ENCODE measurements at regions of chr11 and their contacts with region 1.

Region 1: DNA sequence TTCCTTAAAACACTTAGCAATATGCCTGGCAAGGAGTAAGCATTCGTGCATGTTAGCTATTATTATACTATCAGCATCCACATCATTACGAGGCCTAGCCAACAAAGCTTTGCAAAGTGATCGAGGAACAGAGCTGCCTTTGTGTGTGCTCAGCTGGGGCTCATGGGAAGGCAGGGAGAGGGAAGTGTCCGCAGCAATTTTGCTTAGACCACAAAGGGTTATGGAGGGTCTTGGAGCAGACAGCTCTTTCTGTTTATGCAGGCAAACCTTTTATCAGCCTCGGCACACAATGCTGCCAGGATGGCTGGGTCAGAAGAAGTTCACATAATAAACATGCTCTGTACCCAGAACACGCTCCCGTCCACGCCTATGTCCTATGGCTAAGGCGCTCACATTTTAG is 10.9 kb upstream of the DKK3 start:
- DNase-seq: no peak
- H3K4me3 ChIP-seq: no peak overlapping the region
- H3K27ac ChIP-seq: peak overlapping the region in 2 of 4 donors; percentile 1 to 7
- H3K4me1 ChIP-seq: peaks cover 0 to 6% (median 3%) of the 10 kb centered on the region in 4 donors
- H3K27me3 ChIP-seq: no peaks in the 10 kb centered on the region
- CTCF ChIP-seq: no peak
- EP300 ChIP-seq: no peak
- POLR2A ChIP-seq: no peak

Region 2: GRCh38 chr11:11958403-11959231 is 60.7 kb before region 1 on chr11:
- in situ Hi-C with region 1: no loop called
- intact Hi-C with region 1: loop called (anchors 10 kb)
- DNase-seq: no peak
- H3K4me3 ChIP-seq: no peak overlapping the region
- H3K27ac ChIP-seq: no peak overlapping the region
- H3K4me1 ChIP-seq: no peaks in the 10 kb centered on the region
- H3K27me3 ChIP-seq: no peaks in the 10 kb centered on the region
- CTCF ChIP-seq: no peak
- EP300 ChIP-seq: no peak
- POLR2A ChIP-seq: no peak

Region 3: DNA sequence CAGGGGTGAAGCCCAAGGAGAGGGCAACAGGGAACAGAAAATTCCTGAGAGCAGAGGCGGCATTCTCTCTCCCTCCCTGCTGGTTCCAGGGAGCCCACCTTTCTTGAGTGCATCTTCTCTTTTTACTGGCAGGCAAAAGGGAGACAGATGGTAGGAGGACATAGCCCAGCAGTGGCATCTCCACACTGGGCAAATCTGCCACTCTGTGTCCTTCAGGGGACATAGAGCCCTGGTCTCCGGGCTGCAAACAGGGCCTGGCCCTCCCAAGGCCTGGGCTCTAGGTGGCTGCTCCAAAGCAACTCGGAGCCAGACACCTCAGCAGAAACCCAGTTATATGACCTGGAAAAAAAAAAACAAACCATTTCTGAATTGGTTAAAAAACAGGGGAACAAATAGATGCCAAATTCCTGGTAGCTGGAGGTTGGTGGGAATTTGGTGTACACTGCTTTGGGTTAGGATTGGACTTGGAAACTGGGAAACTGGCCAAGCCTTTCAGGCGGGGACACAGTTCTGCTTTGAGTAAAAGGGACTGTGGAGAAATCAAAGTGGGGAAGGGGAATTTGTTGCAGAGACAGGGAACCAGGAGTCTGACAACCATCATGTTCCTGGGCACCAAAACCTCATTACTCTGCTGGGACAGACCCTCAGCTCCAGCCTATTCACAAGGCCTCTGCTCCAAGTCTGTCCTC is 12.7 kb after region 1 on chr11:
- in situ Hi-C with region 1: no loop called
- intact Hi-C with region 1: no loop called
- DNase-seq: no peak
- H3K4me3 ChIP-seq: no peak overlapping the region
- H3K27ac ChIP-seq: no peak overlapping the region
- H3K4me1 ChIP-seq: no peaks in the 10 kb centered on the region
- H3K27me3 ChIP-seq: peaks cover 3% of the 10 kb centered on the region
- CTCF ChIP-seq: no peak
- EP300 ChIP-seq: no peak
- POLR2A ChIP-seq: no peak